H1 (cell line): ENCODE measurements at regions of chr5 and their contacts with region 1.

Region 1: DNA sequence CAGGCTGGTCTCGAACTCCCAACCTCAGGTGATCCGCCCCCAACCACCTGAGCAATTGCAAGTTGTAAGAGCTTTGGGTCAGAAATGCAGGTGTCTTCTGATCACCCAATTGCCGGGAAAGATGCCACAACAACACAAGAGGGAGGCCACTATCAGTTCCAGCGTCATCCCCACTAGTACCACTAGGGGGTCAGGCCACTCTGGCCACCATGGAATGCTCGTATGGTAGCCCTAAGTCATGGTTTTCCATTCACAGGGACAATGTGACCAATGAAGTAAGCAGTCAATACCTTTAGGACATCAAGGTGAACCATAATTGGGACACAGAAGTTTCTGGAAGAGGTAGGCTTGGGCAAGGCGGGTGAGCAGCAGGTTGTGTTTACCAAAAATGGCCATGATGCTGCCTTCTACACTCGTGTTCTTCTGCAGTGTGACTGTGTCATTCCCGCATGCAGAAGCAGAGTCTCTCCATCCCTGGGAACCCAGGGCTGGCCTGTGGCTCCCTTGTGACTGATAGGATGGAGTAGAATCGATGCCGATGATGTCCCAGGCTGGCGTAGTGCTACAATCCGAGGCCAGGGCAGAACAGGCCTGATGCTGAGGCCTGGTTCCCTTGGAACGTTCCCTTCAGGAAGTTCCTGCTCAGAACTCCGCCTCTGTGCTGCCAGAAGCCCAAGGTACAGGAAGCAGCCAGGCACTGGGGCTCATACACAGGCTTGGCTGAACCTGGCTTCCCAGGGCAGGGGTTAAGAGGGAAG is 42.2 kb upstream of the ANKRD33B start:
- DNase-seq: peak in 1 of 2 experiments; percentile 67
- H3K4me3 ChIP-seq: no peak overlapping the region
- H3K27ac ChIP-seq: no peak overlapping the region
- H3K4me1 ChIP-seq: peaks cover 0 to 5% (median 3%) of the 10 kb centered on the region in 4 experiments; a peak in 4 of 7 replicates
- H3K27me3 ChIP-seq: no peaks in the 10 kb centered on the region; a peak in 1 of 7 replicates
- CTCF ChIP-seq: peak; percentile 50 to 83 (median 81)
- EP300 ChIP-seq: no peak
- POLR2A ChIP-seq: no peak
- RAD21 ChIP-seq: peak; percentile 32 to 58; a peak in 3 of 4 replicates

Region 2: GRCh38 chr5:10552183-10553143 is 30.8 kb after region 1 on chr5:
- CTCF ChIA-PET with region 1: interaction called, 16 read pairs
- POLR2A ChIA-PET with region 1: interaction called, 4 read pairs
- DNase-seq: no peak
- H3K4me3 ChIP-seq: no peak overlapping the region
- H3K27ac ChIP-seq: peak overlapping the region; percentile 58; the same call in 1 of the 2 replicates
- H3K4me1 ChIP-seq: peaks cover 9 to 28% (median 11%) of the 10 kb centered on the region in 4 experiments
- H3K27me3 ChIP-seq: no peaks in the 10 kb centered on the region; a peak in 1 of 7 replicates
- CTCF ChIP-seq: no peak
- EP300 ChIP-seq: no peak
- POLR2A ChIP-seq: no peak
- RAD21 ChIP-seq: no peak

Region 3: GRCh38 chr5:10655161-10655971 is 133.7 kb after region 1 on chr5:
- CTCF ChIA-PET with region 1: no interaction called
- POLR2A ChIA-PET with region 1: no interaction called
- DNase-seq: no peak
- H3K4me3 ChIP-seq: no peak overlapping the region
- H3K27ac ChIP-seq: no peak overlapping the region
- H3K4me1 ChIP-seq: peaks cover 2 to 13% (median 6%) of the 10 kb centered on the region in 4 experiments
- H3K27me3 ChIP-seq: no peaks in the 10 kb centered on the region
- CTCF ChIP-seq: peak in 1 of 3 experiments; percentile 14; a peak in 1 of 4 replicates
- EP300 ChIP-seq: no peak
- POLR2A ChIP-seq: no peak
- RAD21 ChIP-seq: 0 out of 4 replicates have a peak, but pooled peaks of 1 of the 2 experiments have one; percentile 14